Gastrocnemius medialis (tissue), 4 donors: ENCODE measurements at regions of chr12 and their contacts with region 1.

Region 1: GRCh38 chr12:68374307-68374982 is 42.3 kb upstream of the MDM1 start:
- DNase-seq: peak; percentile 62 to 79
- ATAC-seq: peak; percentile 90 to 91
- H3K4me3 ChIP-seq: peak overlapping the region; percentile 3 to 33 (median 8)
- H3K27ac ChIP-seq: peak overlapping the region; percentile 75 to 90 (median 83)
- H3K4me1 ChIP-seq: peaks cover 54 to 64% of the 10 kb centered on the region in 2 donors
- H3K27me3 ChIP-seq: no peaks in the 10 kb centered on the region
- CTCF ChIP-seq: no peak
- POLR2A ChIP-seq: peak in 1 of 2 donors; percentile 29

Region 2: GRCh38 chr12:68358532-68359485 is 15.6 kb before region 1 on chr12:
- in situ Hi-C with region 1: no loop called
- intact Hi-C with region 1: no loop called
- DNase-seq: peak; percentile 28 to 49
- ATAC-seq: peak; percentile 96
- H3K4me3 ChIP-seq: no peak overlapping the region
- H3K27ac ChIP-seq: peak overlapping the region in 3 of 4 donors; percentile 1 to 36 (median 25)
- H3K4me1 ChIP-seq: peaks cover 10 to 14% of the 10 kb centered on the region in 2 donors
- H3K27me3 ChIP-seq: no peaks in the 10 kb centered on the region
- CTCF ChIP-seq: peak; percentile 46 to 75 (median 69)
- POLR2A ChIP-seq: no peak

Region 3: GRCh38 chr12:68400226-68400829 is 25.9 kb after region 1 on chr12:
- in situ Hi-C with region 1: no loop called
- intact Hi-C with region 1: loop called (anchors 2 kb)
- DNase-seq: no peak
- ATAC-seq: no peak
- H3K4me3 ChIP-seq: no peak overlapping the region
- H3K27ac ChIP-seq: no peak overlapping the region
- H3K4me1 ChIP-seq: peaks cover 13 to 28% of the 10 kb centered on the region in 2 donors
- H3K27me3 ChIP-seq: no peaks in the 10 kb centered on the region
- CTCF ChIP-seq: no peak
- POLR2A ChIP-seq: no peak

Region 4: GRCh38 chr12:68406134-68406594 is 31.7 kb after region 1 on chr12:
- in situ Hi-C with region 1: no loop called
- intact Hi-C with region 1: loop called (anchors 1 kb)
- DNase-seq: peak; percentile 84 to 93
- ATAC-seq: peak; percentile 95 to 98
- H3K4me3 ChIP-seq: peak overlapping the region in 3 of 4 donors; percentile 19 to 35 (median 19)
- H3K27ac ChIP-seq: peak overlapping the region; percentile 59 to 78 (median 76)
- H3K4me1 ChIP-seq: peaks cover 30 to 38% of the 10 kb centered on the region in 2 donors
- H3K27me3 ChIP-seq: no peaks in the 10 kb centered on the region
- CTCF ChIP-seq: peak; percentile 12 to 44 (median 33)
- POLR2A ChIP-seq: no peak

Region 5: DNA sequence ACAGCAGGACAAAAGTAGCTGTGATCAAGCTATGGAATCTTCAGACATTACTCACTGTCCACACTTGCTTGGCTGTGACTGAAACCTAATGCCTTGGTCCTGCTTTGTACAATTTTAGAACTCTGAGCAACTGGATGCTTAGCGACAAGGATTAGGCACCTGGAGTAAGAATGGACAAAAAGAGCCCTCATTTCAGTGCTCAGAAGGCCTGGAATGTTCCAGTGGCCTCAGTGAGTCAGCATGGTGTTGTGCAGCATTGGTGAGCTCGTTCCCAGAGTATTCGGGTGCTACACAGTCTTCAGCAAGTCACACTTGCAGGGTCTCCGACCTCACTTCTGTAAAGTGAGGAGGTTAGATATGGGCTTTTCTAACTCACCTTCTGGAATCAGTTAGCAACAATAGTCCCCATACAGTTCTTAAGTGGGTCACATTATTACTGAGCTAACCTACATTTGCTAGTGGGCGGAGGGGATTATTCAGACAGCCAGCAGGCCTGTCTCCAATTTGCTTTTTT is 65.7 kb after region 1 on chr12:
- in situ Hi-C with region 1: no loop called
- intact Hi-C with region 1: loop called (anchors 5 kb)
- DNase-seq: peak; percentile 26 to 54
- ATAC-seq: peak; percentile 99
- H3K4me3 ChIP-seq: no peak overlapping the region
- H3K27ac ChIP-seq: peak overlapping the region; percentile 68 to 85 (median 79)
- H3K4me1 ChIP-seq: peaks cover 9 to 19% of the 10 kb centered on the region in 2 donors
- H3K27me3 ChIP-seq: no peaks in the 10 kb centered on the region
- CTCF ChIP-seq: no peak
- POLR2A ChIP-seq: no peak